B cell (primary cell): ENCODE measurements at regions of chr5 and their contacts with region 1.

Region 1: GRCh38 chr5:177454397-177455035 is 7.9 kb downstream of the PRR7 start:
- DNase-seq: peak; percentile 98
- ATAC-seq: peak; percentile 53
- H3K4me3 ChIP-seq: peak overlapping the region; percentile 13 to 91 (median 74)
- H3K4me3 Mint-ChIP-seq: peak overlapping the region; percentile 96
- H3K27ac ChIP-seq: peak overlapping the region; percentile 88 to 97
- H3K27ac Mint-ChIP-seq: peak overlapping the region; percentile 97
- H3K4me1 ChIP-seq: peaks cover 17 to 32% of the 10 kb centered on the region in 2 donors
- H3K4me1 Mint-ChIP-seq: peaks cover 27% of the 10 kb centered on the region
- H3K27me3 ChIP-seq: peaks cover 0 to 7% (median 0%) of the 10 kb centered on the region in 4 experiments
- H3K27me3 Mint-ChIP-seq: no peaks in the 10 kb centered on the region
- CTCF ChIP-seq: peak; percentile 81

Region 2: DNA sequence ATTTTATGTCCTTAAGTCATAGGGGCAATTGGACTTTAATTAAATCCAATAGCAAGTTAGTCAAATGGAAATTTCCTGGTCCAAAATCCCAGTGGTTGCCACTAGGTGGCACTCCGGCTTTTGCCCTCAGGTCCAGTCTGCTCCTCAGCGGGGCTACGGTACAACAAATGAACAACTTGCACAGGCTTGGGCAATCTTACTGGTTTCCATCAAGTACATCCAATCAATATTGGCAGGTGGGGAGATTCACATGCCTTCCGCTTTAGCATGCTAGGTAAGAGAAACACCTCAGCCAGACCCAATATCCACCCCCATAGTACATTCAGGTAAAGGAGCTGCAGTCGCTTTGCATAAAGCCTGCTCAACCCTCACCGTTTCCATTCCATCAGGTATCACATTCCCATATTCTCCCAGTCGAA is 136.5 kb before region 1 on chr5:
- CTCF ChIA-PET with region 1: interaction called, 4 read pairs
- POLR2A ChIA-PET with region 1: interaction called, 8 read pairs
- intact Hi-C with region 1: loop called (anchors 1 kb)
- DNase-seq: peak; percentile 81
- ATAC-seq: peak; percentile 78
- H3K4me3 ChIP-seq: no peak overlapping the region
- H3K4me3 Mint-ChIP-seq: no peak overlapping the region
- H3K27ac ChIP-seq: no peak overlapping the region
- H3K27ac Mint-ChIP-seq: no peak overlapping the region
- H3K4me1 ChIP-seq: peaks cover 7 to 14% of the 10 kb centered on the region in 2 donors
- H3K4me1 Mint-ChIP-seq: peaks cover 25% of the 10 kb centered on the region
- H3K27me3 ChIP-seq: no peaks in the 10 kb centered on the region
- H3K27me3 Mint-ChIP-seq: no peaks in the 10 kb centered on the region
- CTCF ChIP-seq: peak; percentile 94

Region 3: GRCh38 chr5:177425801-177426565 is 28.5 kb before region 1 on chr5:
- CTCF ChIA-PET with region 1: interaction called, 152 read pairs
- POLR2A ChIA-PET with region 1: interaction called, 103 read pairs
- intact Hi-C with region 1: loop called (anchors 1 kb)
- DNase-seq: peak; percentile 100
- ATAC-seq: peak; percentile 82
- H3K4me3 ChIP-seq: peak overlapping the region; percentile 28 to 74 (median 61)
- H3K4me3 Mint-ChIP-seq: peak overlapping the region; percentile 93
- H3K27ac ChIP-seq: peak overlapping the region; percentile 82 to 88
- H3K27ac Mint-ChIP-seq: peak overlapping the region; percentile 97
- H3K4me1 ChIP-seq: peaks cover 47 to 49% of the 10 kb centered on the region in 2 donors
- H3K4me1 Mint-ChIP-seq: peaks cover 49% of the 10 kb centered on the region
- H3K27me3 ChIP-seq: no peaks in the 10 kb centered on the region
- H3K27me3 Mint-ChIP-seq: no peaks in the 10 kb centered on the region
- CTCF ChIP-seq: no peak

Region 4: GRCh38 chr5:177473461-177474001 is 19.0 kb after region 1 on chr5 and contains the start of gene DBN1:
- CTCF ChIA-PET with region 1: interaction called, 10 read pairs
- POLR2A ChIA-PET with region 1: interaction called, 3 read pairs
- intact Hi-C with region 1: no loop called
- DNase-seq: no peak
- ATAC-seq: peak; percentile 39
- H3K4me3 ChIP-seq: peak within 1 kb of the TSS in 3 of 5 experiments; percentile 41 to 60 (median 49)
- H3K4me3 Mint-ChIP-seq: peak within 1 kb of the TSS; percentile 81
- H3K27ac ChIP-seq: no peak within 1 kb of the TSS
- H3K27ac Mint-ChIP-seq: peak within 1 kb of the TSS; percentile 50
- H3K4me1 ChIP-seq: peaks cover 7 to 19% of the 10 kb centered on the region in 2 donors
- H3K4me1 Mint-ChIP-seq: peaks cover 19% of the 10 kb centered on the region
- H3K27me3 ChIP-seq: peaks cover 0 to 24% (median 7%) of the 10 kb centered on the region in 4 experiments
- H3K27me3 Mint-ChIP-seq: peaks cover 13% of the 10 kb centered on the region
- CTCF ChIP-seq: no peak
- total RNA-seq, gene DBN1: 1.4 and 2.4 TPM in 2 replicates

Region 5: GRCh38 chr5:177509381-177509951 is 55.0 kb after region 1 on chr5 and contains the start of gene DOK3:
- CTCF ChIA-PET with region 1: interaction called, 22 read pairs
- POLR2A ChIA-PET with region 1: interaction called, 14 read pairs
- intact Hi-C with region 1: loop called (anchors 2 kb)
- DNase-seq: peak; percentile 81
- ATAC-seq: peak; percentile 39
- H3K4me3 ChIP-seq: peak within 1 kb of the TSS; percentile 57 to 95 (median 75)
- H3K4me3 Mint-ChIP-seq: peak within 1 kb of the TSS; percentile 94
- H3K27ac ChIP-seq: peak within 1 kb of the TSS; percentile 91 to 96
- H3K27ac Mint-ChIP-seq: peak within 1 kb of the TSS; percentile 98
- H3K4me1 ChIP-seq: peaks cover 38 to 53% of the 10 kb centered on the region in 2 donors
- H3K4me1 Mint-ChIP-seq: peaks cover 55% of the 10 kb centered on the region
- H3K27me3 ChIP-seq: no peaks in the 10 kb centered on the region
- H3K27me3 Mint-ChIP-seq: no peaks in the 10 kb centered on the region
- CTCF ChIP-seq: no peak
- total RNA-seq, gene DOK3: 113 and 115 TPM in 2 replicates